Ovary (tissue), 10 donors: ENCODE measurements at regions of chr3 and their contacts with region 1.

Region 1: GRCh38 chr3:149273096-149273751 is 51.6 kb upstream of the CP start:
- DNase-seq: peak in 2 of 5 donors; percentile 31 to 68
- H3K4me3 ChIP-seq: no peak overlapping the region
- H3K27ac ChIP-seq: no peak overlapping the region
- H3K4me1 ChIP-seq: no peaks in the 10 kb centered on the region
- H3K27me3 ChIP-seq: no peaks in the 10 kb centered on the region
- CTCF ChIP-seq: peak; percentile 89 to 97 (median 96)
- EP300 ChIP-seq: no peak
- POLR2A ChIP-seq: no peak

Region 2: DNA sequence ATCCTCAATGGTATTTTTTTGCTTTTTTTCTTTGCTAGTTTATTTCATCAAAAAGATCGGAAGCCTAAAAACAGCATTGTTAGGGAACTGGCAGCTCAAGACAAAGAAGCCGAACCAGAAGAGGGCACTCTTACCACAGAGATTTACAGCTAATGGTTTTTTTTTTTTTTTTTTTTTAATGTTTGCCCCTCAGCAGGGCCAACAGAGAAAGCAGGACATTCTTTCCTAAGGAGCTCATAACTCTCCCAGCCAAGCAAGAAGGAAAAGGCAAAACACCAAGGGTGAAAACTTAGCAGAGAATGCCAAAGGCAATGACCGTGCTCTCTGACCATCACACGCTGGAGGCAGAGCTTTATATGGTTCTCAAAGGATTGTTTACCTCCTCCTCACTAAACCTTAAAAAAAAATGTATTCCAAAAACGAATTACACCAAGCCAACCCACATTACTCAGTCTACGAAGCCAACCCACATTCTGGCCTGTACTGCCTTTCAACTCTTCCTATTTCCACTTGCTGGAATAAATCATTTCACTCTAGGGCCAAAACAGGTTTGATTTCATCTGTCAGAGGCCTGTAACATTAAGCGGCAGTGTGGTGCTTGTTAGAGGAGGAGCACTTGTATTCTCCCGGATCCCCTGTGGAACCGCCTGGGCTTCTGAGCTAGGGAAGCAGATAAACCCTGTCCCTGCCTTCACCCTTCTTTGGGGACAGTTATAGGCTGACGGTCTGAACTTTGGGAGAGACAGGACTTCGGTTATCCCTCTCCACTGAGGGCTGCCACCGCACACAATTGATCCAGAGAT is 317.5 kb before region 1 on chr3:
- intact Hi-C with region 1: loop called (anchors 2 to 10 kb)
- DNase-seq: peak; percentile 53 to 79 (median 62)
- H3K4me3 ChIP-seq: no peak overlapping the region
- H3K27ac ChIP-seq: peak overlapping the region; percentile 87 to 95
- H3K4me1 ChIP-seq: peaks cover 12% of the 10 kb centered on the region
- H3K27me3 ChIP-seq: no peaks in the 10 kb centered on the region
- CTCF ChIP-seq: peak; percentile 28 to 62 (median 34)
- EP300 ChIP-seq: no peak
- POLR2A ChIP-seq: no peak

Region 3: GRCh38 chr3:148962513-148962912 is 310.7 kb before region 1 on chr3:
- intact Hi-C with region 1: loop called (anchors 2 to 10 kb)
- DNase-seq: peak in 2 of 5 donors; percentile 37 to 38
- H3K4me3 ChIP-seq: no peak overlapping the region
- H3K27ac ChIP-seq: no peak overlapping the region
- H3K4me1 ChIP-seq: peaks cover 4% of the 10 kb centered on the region
- H3K27me3 ChIP-seq: no peaks in the 10 kb centered on the region
- CTCF ChIP-seq: no peak
- EP300 ChIP-seq: no peak
- POLR2A ChIP-seq: no peak

Region 4: GRCh38 chr3:149115114-149115513 is 158.1 kb before region 1 on chr3:
- intact Hi-C with region 1: loop called in 3 of 4 experiments (anchors 2 to 5 kb)
- DNase-seq: no peak
- H3K4me3 ChIP-seq: no peak overlapping the region
- H3K27ac ChIP-seq: no peak overlapping the region
- H3K4me1 ChIP-seq: no peaks in the 10 kb centered on the region
- H3K27me3 ChIP-seq: no peaks in the 10 kb centered on the region
- CTCF ChIP-seq: no peak
- EP300 ChIP-seq: no peak
- POLR2A ChIP-seq: no peak

Region 5: GRCh38 chr3:149120051-149120972 is 152.9 kb before region 1 on chr3:
- intact Hi-C with region 1: loop called (anchors 2 to 5 kb)
- DNase-seq: no peak
- H3K4me3 ChIP-seq: no peak overlapping the region
- H3K27ac ChIP-seq: peak overlapping the region in 1 of 2 donors; percentile 52
- H3K4me1 ChIP-seq: no peaks in the 10 kb centered on the region
- H3K27me3 ChIP-seq: no peaks in the 10 kb centered on the region
- CTCF ChIP-seq: peak; percentile 56 to 71 (median 57)
- EP300 ChIP-seq: no peak
- POLR2A ChIP-seq: no peak

Region 6: GRCh38 chr3:149377408-149378377 is 104.5 kb after region 1 on chr3 and contains the start of gene TM4SF1:
- intact Hi-C with region 1: no loop called
- DNase-seq: peak; percentile 45 to 66 (median 51)
- H3K4me3 ChIP-seq: peak within 1 kb of the TSS; percentile 31
- H3K27ac ChIP-seq: peak within 1 kb of the TSS; percentile 36 to 41
- H3K4me1 ChIP-seq: peaks cover 8% of the 10 kb centered on the region
- H3K27me3 ChIP-seq: no peaks in the 10 kb centered on the region
- CTCF ChIP-seq: no peak
- EP300 ChIP-seq: no peak
- POLR2A ChIP-seq: no peak
- total RNA-seq, gene TM4SF1: 35.6 to 207 (median 54.9) TPM